CD4-positive, alpha-beta T cell (primary cell): ENCODE measurements at regions of chr4 and their contacts with region 1.

Region 1: GRCh38 chr4:55546756-55547465 is at the start of gene CLOCK:
- DNase-seq: peak; percentile 63 to 94 (median 81)
- ATAC-seq: peak; percentile 71
- H3K4me3 ChIP-seq: peak within 1 kb of the TSS; percentile 96
- H3K4me3 Mint-ChIP-seq: peak within 1 kb of the TSS; percentile 93
- H3K27ac ChIP-seq: peak within 1 kb of the TSS; percentile 75 to 82
- H3K27ac Mint-ChIP-seq: peak within 1 kb of the TSS; percentile 85
- H3K4me1 ChIP-seq: peaks cover 5% of the 10 kb centered on the region
- H3K4me1 Mint-ChIP-seq: peaks cover 39% of the 10 kb centered on the region
- H3K27me3 ChIP-seq: no peaks in the 10 kb centered on the region
- H3K27me3 Mint-ChIP-seq: no peaks in the 10 kb centered on the region
- CTCF ChIP-seq: peak; percentile 47
- total RNA-seq, gene CLOCK: 4.9 to 5.6 TPM

Region 2: DNA sequence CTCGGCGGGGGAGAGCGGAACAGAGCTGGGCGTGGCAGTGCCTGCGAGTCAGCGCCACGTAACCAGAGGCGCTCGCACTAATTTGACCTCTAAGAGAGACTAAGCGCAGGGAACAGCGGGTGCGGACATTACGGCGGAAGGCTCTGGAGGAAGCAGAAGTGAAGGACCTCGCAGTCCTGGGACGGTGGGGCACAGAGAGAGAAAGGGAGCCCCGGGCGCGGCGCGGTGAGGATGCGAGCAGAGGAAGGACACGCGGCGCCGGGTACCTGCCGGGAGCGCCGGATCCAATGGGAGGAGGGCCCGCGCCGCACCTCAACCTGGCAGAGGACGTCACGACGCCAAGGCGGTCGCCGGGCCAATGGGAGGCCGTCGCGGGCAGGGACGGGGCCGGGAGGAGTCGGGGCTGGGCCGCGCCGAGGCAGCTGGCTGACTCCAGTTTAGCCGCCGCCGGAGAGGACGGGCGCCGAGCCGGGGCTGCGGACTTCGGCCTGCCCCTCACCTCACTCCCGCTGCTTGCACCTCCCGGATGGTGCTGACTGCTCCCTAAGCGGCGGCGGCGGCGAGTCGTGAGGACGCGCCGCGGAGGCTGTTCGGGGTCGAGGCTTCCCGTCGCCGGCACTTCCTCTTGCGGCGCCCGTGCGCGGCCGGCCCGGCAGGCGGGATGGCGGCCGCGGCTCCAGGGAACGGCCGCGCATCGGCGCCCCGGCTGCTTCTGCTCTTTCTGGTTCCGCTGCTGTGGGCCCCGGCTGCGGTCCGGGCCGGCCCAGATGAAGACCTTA is 151.2 kb before region 1 on chr4 and contains the start of gene TMEM165:
- CTCF ChIA-PET with region 1: interaction called, 5 read pairs
- POLR2A ChIA-PET with region 1: interaction called, 37 read pairs
- intact Hi-C with region 1: loop called (anchors 1 to 2 kb)
- DNase-seq: peak; percentile 77 to 94 (median 84)
- ATAC-seq: peak; percentile 93
- H3K4me3 ChIP-seq: peak within 1 kb of the TSS; percentile 79
- H3K4me3 Mint-ChIP-seq: peak within 1 kb of the TSS; percentile 97
- H3K27ac ChIP-seq: peak within 1 kb of the TSS; percentile 73 to 94
- H3K27ac Mint-ChIP-seq: peak within 1 kb of the TSS; percentile 89
- H3K4me1 ChIP-seq: peaks cover 34% of the 10 kb centered on the region
- H3K4me1 Mint-ChIP-seq: peaks cover 44% of the 10 kb centered on the region
- H3K27me3 ChIP-seq: no peaks in the 10 kb centered on the region
- H3K27me3 Mint-ChIP-seq: no peaks in the 10 kb centered on the region
- CTCF ChIP-seq: no peak
- total RNA-seq, gene TMEM165: 44.8 to 46.0 TPM

Region 3: DNA sequence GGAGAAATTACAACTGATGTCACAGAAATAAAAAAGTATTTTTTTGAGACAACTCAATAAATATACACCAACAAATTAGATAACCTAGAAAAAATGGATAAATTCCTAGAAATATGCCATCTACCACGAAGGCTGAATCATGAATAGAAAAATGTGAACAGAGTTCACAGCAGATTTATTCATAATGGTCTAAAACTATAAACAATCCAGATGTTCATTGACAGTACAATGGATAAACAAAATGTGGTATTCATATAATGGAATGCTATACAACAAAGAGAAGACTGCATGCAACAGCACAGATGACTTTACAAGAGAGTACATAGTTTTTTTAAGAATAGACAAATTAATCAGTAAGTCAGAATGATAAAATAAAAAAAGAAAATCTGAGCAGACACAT is 55.4 kb before region 1 on chr4:
- CTCF ChIA-PET with region 1: no interaction called
- POLR2A ChIA-PET with region 1: no interaction called
- intact Hi-C with region 1: loop called in 1 of 2 experiments (anchors 10 kb)
- DNase-seq: no peak
- ATAC-seq: no peak
- H3K4me3 ChIP-seq: no peak overlapping the region
- H3K4me3 Mint-ChIP-seq: no peak overlapping the region
- H3K27ac ChIP-seq: no peak overlapping the region
- H3K27ac Mint-ChIP-seq: no peak overlapping the region
- H3K4me1 ChIP-seq: no peaks in the 10 kb centered on the region
- H3K4me1 Mint-ChIP-seq: no peaks in the 10 kb centered on the region
- H3K27me3 ChIP-seq: no peaks in the 10 kb centered on the region
- H3K27me3 Mint-ChIP-seq: no peaks in the 10 kb centered on the region
- CTCF ChIP-seq: no peak

Region 4: DNA sequence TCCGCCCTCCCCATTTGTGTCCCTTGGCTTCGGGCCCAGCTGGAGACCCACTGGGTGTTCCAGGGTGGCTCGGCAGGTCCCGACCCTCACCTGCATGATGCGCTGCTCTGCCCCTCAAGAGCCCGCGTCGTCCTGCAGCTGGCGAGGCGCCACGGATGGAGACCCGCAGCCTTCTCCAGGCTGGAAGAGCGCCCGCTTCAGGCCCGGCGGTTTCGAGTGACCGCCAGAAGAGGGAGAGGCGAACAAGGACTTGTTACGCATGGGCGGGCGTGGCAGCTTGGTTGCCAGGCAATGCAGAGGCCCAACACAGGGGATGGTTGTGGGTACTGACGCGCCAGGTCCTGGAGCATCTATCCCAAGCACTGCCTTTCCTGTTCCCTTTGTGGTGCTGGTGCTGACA is 45.1 kb after region 1 on chr4 and contains the start of gene PDCL2:
- CTCF ChIA-PET with region 1: no interaction called
- POLR2A ChIA-PET with region 1: no interaction called
- intact Hi-C with region 1: no loop called
- DNase-seq: no peak
- ATAC-seq: no peak
- H3K4me3 ChIP-seq: no peak within 1 kb of the TSS
- H3K4me3 Mint-ChIP-seq: no peak within 1 kb of the TSS
- H3K27ac ChIP-seq: no peak within 1 kb of the TSS
- H3K27ac Mint-ChIP-seq: no peak within 1 kb of the TSS
- H3K4me1 ChIP-seq: no peaks in the 10 kb centered on the region
- H3K4me1 Mint-ChIP-seq: no peaks in the 10 kb centered on the region
- H3K27me3 ChIP-seq: no peaks in the 10 kb centered on the region
- H3K27me3 Mint-ChIP-seq: peaks cover 7% of the 10 kb centered on the region
- CTCF ChIP-seq: no peak
- total RNA-seq, gene PDCL2: not detected

Region 5: GRCh38 chr4:55866973-55867574 is 320.2 kb after region 1 on chr4:
- CTCF ChIA-PET with region 1: interaction called, 4 read pairs
- POLR2A ChIA-PET with region 1: interaction called, 3 read pairs
- intact Hi-C with region 1: loop called in 1 of 2 experiments (anchors 5 kb)
- DNase-seq: peak in 6 of 14 experiments; percentile 9 to 74 (median 50)
- ATAC-seq: peak; percentile 91
- H3K4me3 ChIP-seq: no peak overlapping the region
- H3K4me3 Mint-ChIP-seq: no peak overlapping the region
- H3K27ac ChIP-seq: no peak overlapping the region
- H3K27ac Mint-ChIP-seq: no peak overlapping the region
- H3K4me1 ChIP-seq: no peaks in the 10 kb centered on the region
- H3K4me1 Mint-ChIP-seq: peaks cover 17% of the 10 kb centered on the region
- H3K27me3 ChIP-seq: no peaks in the 10 kb centered on the region
- H3K27me3 Mint-ChIP-seq: no peaks in the 10 kb centered on the region
- CTCF ChIP-seq: peak; percentile 99

Region 6: GRCh38 chr4:56977321-56978012 is 1430.6 kb after region 1 on chr4 and contains the start of gene NOA1:
- CTCF ChIA-PET with region 1: no interaction called
- POLR2A ChIA-PET with region 1: interaction called, 7 read pairs
- intact Hi-C with region 1: loop called in 1 of 2 experiments (anchors 5 kb)
- DNase-seq: peak; percentile 95 to 99 (median 96)
- ATAC-seq: peak; percentile 80
- H3K4me3 ChIP-seq: peak within 1 kb of the TSS; percentile 99
- H3K4me3 Mint-ChIP-seq: peak within 1 kb of the TSS; percentile 96
- H3K27ac ChIP-seq: peak within 1 kb of the TSS; percentile 73 to 92
- H3K27ac Mint-ChIP-seq: peak within 1 kb of the TSS; percentile 95
- H3K4me1 ChIP-seq: peaks cover 54% of the 10 kb centered on the region
- H3K4me1 Mint-ChIP-seq: peaks cover 70% of the 10 kb centered on the region
- H3K27me3 ChIP-seq: no peaks in the 10 kb centered on the region
- H3K27me3 Mint-ChIP-seq: no peaks in the 10 kb centered on the region
- CTCF ChIP-seq: no peak
- total RNA-seq, gene NOA1: 14.3 to 15.6 TPM